Naive thymus-derived CD4-positive, alpha-beta T cell (primary cell): ENCODE measurements at regions of chr6 and their contacts with region 1.

Region 1: GRCh38 chr6:32666420-32667300 is at the start of gene HLA-DQB1:
- DNase-seq: peak in 5 of 9 donors; percentile 49 to 67 (median 61)
- ATAC-seq: peak; percentile 90
- H3K4me3 ChIP-seq: peak within 1 kb of the TSS; percentile 63
- H3K4me3 Mint-ChIP-seq: peak within 1 kb of the TSS; percentile 45 to 88 (median 75)
- H3K27ac ChIP-seq: peak within 1 kb of the TSS; percentile 45
- H3K27ac Mint-ChIP-seq: peak within 1 kb of the TSS in 6 of 9 donors; percentile 47 to 86 (median 68)
- H3K4me1 ChIP-seq: peaks cover 11% of the 10 kb centered on the region in 2 donors
- H3K4me1 Mint-ChIP-seq: peaks cover 21 to 48% (median 40%) of the 10 kb centered on the region in 7 donors
- H3K27me3 ChIP-seq: no peaks in the 10 kb centered on the region
- H3K27me3 Mint-ChIP-seq: peaks cover 12 to 62% (median 24%) of the 10 kb centered on the region in 5 donors
- total RNA-seq, gene HLA-DQB1: 5.3 to 38.9 (median 9.4) TPM

Region 2: DNA sequence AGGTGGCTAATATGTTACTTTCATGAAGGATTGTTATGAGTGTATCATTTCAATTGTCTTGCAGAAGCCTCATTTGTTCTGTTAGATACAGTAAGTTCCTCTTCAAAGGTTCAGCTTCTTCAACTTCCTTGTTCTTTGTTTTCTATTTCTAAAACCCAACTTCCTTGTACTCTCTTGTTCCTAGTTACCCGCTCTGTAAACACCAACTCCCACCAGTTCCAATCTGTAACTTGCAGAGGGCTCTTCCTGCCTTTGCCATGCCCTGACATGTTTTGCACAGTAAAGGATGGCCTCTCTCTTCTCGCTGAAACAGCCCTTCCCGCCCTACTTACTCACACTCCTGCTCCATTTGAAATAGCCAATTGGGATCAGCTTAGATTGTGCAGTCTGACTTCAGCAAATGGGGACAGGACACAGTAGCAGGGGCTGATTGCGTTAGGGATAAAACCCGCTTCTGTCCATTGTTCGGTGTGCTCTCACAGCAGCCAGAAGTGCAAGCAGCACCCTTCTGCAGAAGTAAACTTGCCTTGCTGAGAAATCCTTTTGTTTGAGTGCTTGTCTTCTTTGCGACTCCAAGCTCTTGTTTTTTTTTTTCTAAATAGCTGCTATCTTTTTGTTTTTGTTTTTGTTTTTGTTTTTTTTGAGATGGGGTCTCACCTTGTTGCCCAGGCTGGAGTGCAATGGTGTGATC is 1450.3 kb before region 1 on chr6:
- CTCF ChIA-PET with region 1: no interaction called
- POLR2A ChIA-PET with region 1: no interaction called
- intact Hi-C with region 1: no loop called
- DNase-seq: no peak
- ATAC-seq: peak; percentile 66
- H3K4me3 ChIP-seq: no peak overlapping the region
- H3K4me3 Mint-ChIP-seq: peak overlapping the region in 1 of 10 donors; percentile 52
- H3K27ac ChIP-seq: no peak overlapping the region
- H3K27ac Mint-ChIP-seq: peak overlapping the region in 1 of 9 donors; percentile 64
- H3K4me1 ChIP-seq: no peaks in the 10 kb centered on the region
- H3K4me1 Mint-ChIP-seq: peaks cover 0 to 6% (median 0%) of the 10 kb centered on the region in 7 donors
- H3K27me3 ChIP-seq: no peaks in the 10 kb centered on the region
- H3K27me3 Mint-ChIP-seq: peaks cover 0 to 4% (median 0%) of the 10 kb centered on the region in 5 donors

Region 3: GRCh38 chr6:32462609-32463008 is 204.1 kb before region 1 on chr6:
- CTCF ChIA-PET with region 1: no interaction called
- POLR2A ChIA-PET with region 1: no interaction called
- intact Hi-C with region 1: no loop called
- DNase-seq: peak in 1 of 9 donors; percentile 38
- ATAC-seq: no peak
- H3K4me3 ChIP-seq: no peak overlapping the region
- H3K4me3 Mint-ChIP-seq: no peak overlapping the region
- H3K27ac ChIP-seq: no peak overlapping the region
- H3K27ac Mint-ChIP-seq: no peak overlapping the region
- H3K4me1 ChIP-seq: no peaks in the 10 kb centered on the region
- H3K4me1 Mint-ChIP-seq: peaks cover 0 to 15% (median 12%) of the 10 kb centered on the region in 7 donors
- H3K27me3 ChIP-seq: no peaks in the 10 kb centered on the region
- H3K27me3 Mint-ChIP-seq: peaks cover 42 to 56% (median 48%) of the 10 kb centered on the region in 5 donors

Region 4: DNA sequence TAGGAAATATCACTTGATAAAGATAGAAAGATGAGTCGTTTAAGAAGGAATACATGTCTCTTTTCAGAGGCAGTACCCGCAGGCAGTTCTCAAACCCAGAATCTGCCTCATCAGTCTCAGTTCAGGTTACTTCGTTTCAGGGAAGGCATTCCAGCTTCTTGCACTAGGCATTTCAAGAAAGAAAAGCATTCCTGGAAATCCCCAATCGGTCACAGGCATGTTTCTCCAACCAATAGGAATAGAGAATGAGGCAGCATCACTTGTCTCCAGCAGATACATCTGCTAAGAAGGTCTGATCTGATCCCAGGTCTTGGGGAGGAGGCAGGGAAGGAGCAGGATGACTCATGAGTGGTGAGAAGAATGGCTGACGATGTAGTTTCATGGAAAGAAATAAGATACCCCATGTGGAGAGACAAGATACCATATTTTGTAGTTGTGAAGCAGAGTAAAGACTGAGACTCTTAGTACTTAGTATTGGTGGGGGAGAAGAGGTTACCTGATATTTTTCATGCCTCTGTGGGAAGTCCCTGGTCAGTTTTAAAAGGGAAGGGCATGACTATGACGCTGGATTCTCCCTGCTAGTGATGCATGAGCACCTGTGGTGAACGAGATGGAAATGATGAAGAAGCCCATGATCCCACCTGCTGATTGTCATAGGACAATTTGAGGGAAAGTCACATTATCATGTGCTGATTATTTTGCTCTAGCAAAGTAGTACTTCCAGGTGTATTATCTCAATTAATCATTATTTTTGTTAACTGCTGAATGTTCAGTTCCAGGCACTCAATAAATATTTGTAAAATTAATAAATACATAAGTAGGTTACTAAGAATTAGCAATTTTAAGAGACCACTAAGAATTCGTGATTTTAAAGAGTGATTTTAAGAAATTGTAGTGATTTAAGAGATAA is 56.7 kb before region 1 on chr6:
- CTCF ChIA-PET with region 1: no interaction called
- POLR2A ChIA-PET with region 1: no interaction called
- intact Hi-C with region 1: loop called in 1 of 2 experiments (anchors 5 kb)
- DNase-seq: peak in 8 of 9 donors; percentile 36 to 66 (median 55)
- ATAC-seq: peak; percentile 96
- H3K4me3 ChIP-seq: peak overlapping the region; percentile 16
- H3K4me3 Mint-ChIP-seq: no peak overlapping the region
- H3K27ac ChIP-seq: peak overlapping the region; percentile 65
- H3K27ac Mint-ChIP-seq: no peak overlapping the region
- H3K4me1 ChIP-seq: peaks cover 0 to 6% of the 10 kb centered on the region in 2 donors
- H3K4me1 Mint-ChIP-seq: peaks cover 0 to 13% (median 4%) of the 10 kb centered on the region in 7 donors
- H3K27me3 ChIP-seq: no peaks in the 10 kb centered on the region
- H3K27me3 Mint-ChIP-seq: peaks cover 0 to 12% (median 0%) of the 10 kb centered on the region in 5 donors

Region 5: GRCh38 chr6:32685603-32686002 is 18.9 kb after region 1 on chr6:
- CTCF ChIA-PET with region 1: interaction called, 3 read pairs
- POLR2A ChIA-PET with region 1: no interaction called
- intact Hi-C with region 1: loop called (anchors 1 kb)
- DNase-seq: peak in 7 of 9 donors; percentile 12 to 87 (median 62)
- ATAC-seq: peak; percentile 95
- H3K4me3 ChIP-seq: no peak overlapping the region
- H3K4me3 Mint-ChIP-seq: peak overlapping the region in 9 of 10 donors; percentile 5 to 82 (median 56)
- H3K27ac ChIP-seq: no peak overlapping the region
- H3K27ac Mint-ChIP-seq: peak overlapping the region; percentile 9 to 91 (median 78)
- H3K4me1 ChIP-seq: peaks cover 14 to 17% of the 10 kb centered on the region in 2 donors
- H3K4me1 Mint-ChIP-seq: peaks cover 17 to 35% (median 27%) of the 10 kb centered on the region in 7 donors
- H3K27me3 ChIP-seq: no peaks in the 10 kb centered on the region
- H3K27me3 Mint-ChIP-seq: peaks cover 0 to 37% (median 0%) of the 10 kb centered on the region in 5 donors

Region 6: DNA sequence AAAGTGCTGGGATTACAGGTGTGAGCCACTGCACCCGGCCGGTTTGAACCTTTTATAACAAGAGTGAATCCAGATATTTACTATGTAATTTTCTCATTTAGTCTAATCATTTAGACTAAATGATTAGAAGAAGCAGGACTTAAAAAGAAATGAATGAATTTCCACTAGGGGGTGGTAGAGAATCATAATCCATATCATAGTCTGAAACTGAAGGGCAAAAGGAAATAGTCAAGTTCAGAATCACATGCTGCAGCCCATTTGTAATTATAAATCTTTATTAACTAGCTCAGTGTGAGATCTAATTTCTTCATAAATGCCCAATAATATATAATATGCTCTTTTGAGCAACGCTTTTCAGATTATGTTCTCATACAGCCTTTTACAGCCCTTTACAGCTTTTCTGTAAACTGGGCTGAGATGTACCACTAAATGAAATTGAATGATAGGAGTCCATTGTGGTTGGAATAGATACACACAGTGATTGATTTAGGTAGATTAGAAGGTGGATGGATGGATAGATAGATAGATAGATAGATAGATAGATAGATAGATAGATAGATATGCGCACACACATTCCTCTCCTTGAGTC is 219.1 kb after region 1 on chr6:
- CTCF ChIA-PET with region 1: no interaction called
- POLR2A ChIA-PET with region 1: no interaction called
- intact Hi-C with region 1: no loop called
- DNase-seq: peak in 7 of 9 donors; percentile 48 to 78 (median 68)
- ATAC-seq: peak; percentile 69
- H3K4me3 ChIP-seq: no peak overlapping the region
- H3K4me3 Mint-ChIP-seq: no peak overlapping the region
- H3K27ac ChIP-seq: no peak overlapping the region
- H3K27ac Mint-ChIP-seq: no peak overlapping the region
- H3K4me1 ChIP-seq: no peaks in the 10 kb centered on the region
- H3K4me1 Mint-ChIP-seq: peaks cover 0 to 4% (median 0%) of the 10 kb centered on the region in 7 donors
- H3K27me3 ChIP-seq: no peaks in the 10 kb centered on the region
- H3K27me3 Mint-ChIP-seq: peaks cover 0 to 10% (median 0%) of the 10 kb centered on the region in 5 donors